ENCODE measurements at regions of chr10 and their contacts with region 1.

Region 1: GRCh38 chr10:101818119-101818871 is at the start of gene OGA:
- DNase-seq: peak; percentile 99
- ATAC-seq: peak; percentile 90
- H3K4me3 ChIP-seq: peak within 1 kb of the TSS; percentile 81 to 95 (median 89)
- H3K27ac ChIP-seq: peak within 1 kb of the TSS; percentile 91
- H3K4me1 ChIP-seq: peaks cover 38% of the 10 kb centered on the region
- H3K27me3 ChIP-seq: no peaks in the 10 kb centered on the region; a peak in 1 of 5 replicates
- CTCF ChIP-seq: no peak
- EP300 ChIP-seq: peak in 1 of 2 experiments; percentile 47; a peak in 2 of 4 replicates
- POLR2A ChIP-seq: peak; percentile 85 to 87
- RAD21 ChIP-seq: peak; percentile 23; the same call in 1 of the 2 replicates
- total RNA-seq, gene OGA: 33.2 and 36.5 TPM in 2 replicates

Region 2: DNA sequence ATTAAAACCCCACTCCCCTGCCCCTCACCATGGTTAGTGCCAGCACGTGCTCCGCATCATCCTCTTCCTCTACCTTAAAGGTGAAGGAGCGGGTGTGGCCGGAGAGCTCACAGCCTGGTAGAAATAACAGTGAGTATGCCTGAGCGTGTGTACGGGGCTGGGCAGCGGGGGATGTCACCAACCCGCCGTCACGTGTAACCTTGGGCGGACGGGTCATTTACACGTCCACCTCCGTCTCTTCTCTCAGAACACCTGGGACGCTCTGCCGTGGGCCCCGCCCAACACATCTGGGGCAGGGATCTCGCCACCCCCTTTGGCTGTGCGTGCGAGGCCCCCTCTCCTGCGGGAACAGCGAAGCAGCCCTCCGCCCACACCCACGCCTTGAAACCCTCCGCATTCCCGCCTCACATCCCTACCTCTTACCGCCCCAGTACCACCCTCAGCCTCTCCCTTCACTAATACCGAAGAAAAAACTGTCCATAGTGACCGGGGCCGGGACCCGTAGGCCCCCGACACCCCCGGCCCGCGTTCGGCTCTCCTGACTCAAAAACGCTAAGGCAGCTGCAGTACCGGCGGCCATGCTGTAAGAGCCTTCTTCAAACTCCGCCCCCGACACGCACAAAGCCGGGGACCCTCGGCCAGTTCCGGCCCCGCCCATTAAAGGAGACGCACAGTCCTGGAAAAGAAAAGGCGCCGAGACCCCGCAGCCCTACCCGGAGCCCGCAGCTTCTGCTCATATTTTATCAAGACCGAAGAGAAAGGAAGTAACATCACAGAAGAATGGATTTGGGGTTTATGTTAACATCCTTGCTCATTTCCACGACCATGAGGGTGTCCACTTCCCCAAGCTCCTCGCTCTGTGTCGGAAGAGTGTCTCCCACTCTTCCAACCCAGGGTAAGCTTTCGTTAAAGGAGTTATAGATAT is 35.2 kb before region 1 on chr10 and contains the start of gene NPM3:
- CTCF ChIA-PET with region 1: no interaction called
- POLR2A ChIA-PET with region 1: interaction called, 16 read pairs
- in situ Hi-C with region 1: no loop called
- intact Hi-C with region 1: no loop called
- DNase-seq: peak; percentile 76
- ATAC-seq: peak; percentile 77
- H3K4me3 ChIP-seq: peak within 1 kb of the TSS; percentile 84 to 94 (median 88)
- H3K27ac ChIP-seq: peak within 1 kb of the TSS; percentile 55
- H3K4me1 ChIP-seq: peaks cover 50% of the 10 kb centered on the region
- H3K27me3 ChIP-seq: no peaks in the 10 kb centered on the region; a peak in 1 of 5 replicates
- CTCF ChIP-seq: no peak
- EP300 ChIP-seq: no peak
- POLR2A ChIP-seq: peak in 1 of 2 experiments; percentile 72
- RAD21 ChIP-seq: peak; percentile 4; the same call in 1 of the 2 replicates
- total RNA-seq, gene NPM3: 129 and 160 TPM in 2 replicates

Region 3: GRCh38 chr10:101840741-101841453 is 22.6 kb after region 1 on chr10:
- CTCF ChIA-PET with region 1: no interaction called
- POLR2A ChIA-PET with region 1: interaction called, 17 read pairs
- in situ Hi-C with region 1: no loop called
- intact Hi-C with region 1: loop called (anchors 2 kb)
- DNase-seq: peak; percentile 62
- ATAC-seq: peak; percentile 87
- H3K4me3 ChIP-seq: peak overlapping the region in 2 of 3 experiments; percentile 46 to 49; a peak in 4 of 6 replicates
- H3K27ac ChIP-seq: no peak overlapping the region
- H3K4me1 ChIP-seq: peaks cover 33% of the 10 kb centered on the region
- H3K27me3 ChIP-seq: no peaks in the 10 kb centered on the region
- CTCF ChIP-seq: peak; percentile 93
- EP300 ChIP-seq: no peak
- POLR2A ChIP-seq: no peak
- RAD21 ChIP-seq: peak; percentile 87

Measured in HepG2 (cell line).